ENCODE measurements at regions of chr2 and their contacts with region 1.

Region 1: DNA sequence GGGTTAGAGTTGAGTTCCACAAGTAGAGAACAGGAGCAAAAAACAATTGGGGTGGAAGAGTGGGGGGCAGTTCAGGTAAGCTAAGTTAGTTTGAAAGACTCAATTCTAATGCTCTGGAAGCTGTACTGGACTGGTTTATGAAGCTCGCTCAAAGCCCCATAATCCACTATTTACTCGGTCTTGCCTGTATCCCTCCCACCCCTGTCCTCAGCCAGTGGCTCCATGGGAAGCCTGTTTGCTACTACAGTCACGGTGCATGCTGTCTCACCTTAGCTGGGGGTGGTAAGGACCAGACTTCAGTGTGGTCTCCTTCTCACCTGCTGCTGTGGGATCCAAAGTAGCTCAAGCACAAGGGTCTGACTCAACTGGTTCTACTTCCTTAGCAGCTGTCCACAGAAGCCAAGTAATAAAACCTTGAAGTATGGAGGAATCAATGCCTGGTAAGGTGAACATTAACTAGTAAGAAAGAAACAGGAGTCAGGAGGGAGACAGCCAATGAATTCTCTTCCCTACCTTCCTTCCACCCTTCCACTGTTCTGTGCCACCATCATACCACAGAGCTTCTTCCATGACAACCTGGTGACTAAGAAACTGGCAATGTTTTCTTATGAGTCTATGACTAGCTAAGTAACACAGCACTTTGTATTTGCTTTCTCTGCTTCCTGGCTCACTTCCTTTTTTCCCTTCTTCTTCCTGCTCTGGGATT is 230.8 kb downstream of the SRBD1 start:
- DNase-seq: peak; percentile 98
- ATAC-seq: peak; percentile 98
- H3K4me3 ChIP-seq: no peak overlapping the region
- H3K27ac ChIP-seq: peak overlapping the region; percentile 98
- H3K4me1 ChIP-seq: peaks cover 40% of the 10 kb centered on the region
- H3K27me3 ChIP-seq: no peaks in the 10 kb centered on the region
- CTCF ChIP-seq: no peak

Region 2: DNA sequence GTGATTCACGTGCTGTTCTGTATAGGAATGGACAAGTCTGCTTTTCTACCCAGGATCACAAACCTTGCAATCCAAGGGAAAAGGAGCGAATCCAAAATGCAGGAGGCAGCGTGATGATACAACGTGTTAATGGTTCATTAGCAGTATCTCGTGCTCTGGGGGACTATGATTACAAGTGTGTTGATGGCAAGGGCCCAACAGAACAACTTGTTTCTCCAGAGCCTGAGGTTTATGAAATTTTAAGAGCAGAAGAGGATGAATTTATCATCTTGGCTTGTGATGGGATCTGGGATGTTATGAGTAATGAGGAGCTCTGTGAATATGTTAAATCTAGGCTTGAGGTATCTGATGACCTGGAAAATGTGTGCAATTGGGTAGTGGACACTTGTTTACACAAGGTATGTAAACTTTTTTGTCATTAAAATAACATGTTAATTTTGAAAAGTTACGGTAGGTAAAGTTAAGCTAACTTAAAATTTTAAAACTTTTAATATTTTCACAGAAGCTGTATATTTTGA is 1178.6 kb before region 1 on chr2:
- CTCF ChIA-PET with region 1: no interaction called
- POLR2A ChIA-PET with region 1: no interaction called
- intact Hi-C with region 1: no loop called
- DNase-seq: no peak
- ATAC-seq: no peak
- H3K4me3 ChIP-seq: no peak overlapping the region
- H3K27ac ChIP-seq: no peak overlapping the region
- H3K4me1 ChIP-seq: no peaks in the 10 kb centered on the region
- H3K27me3 ChIP-seq: no peaks in the 10 kb centered on the region
- CTCF ChIP-seq: no peak

Region 3: DNA sequence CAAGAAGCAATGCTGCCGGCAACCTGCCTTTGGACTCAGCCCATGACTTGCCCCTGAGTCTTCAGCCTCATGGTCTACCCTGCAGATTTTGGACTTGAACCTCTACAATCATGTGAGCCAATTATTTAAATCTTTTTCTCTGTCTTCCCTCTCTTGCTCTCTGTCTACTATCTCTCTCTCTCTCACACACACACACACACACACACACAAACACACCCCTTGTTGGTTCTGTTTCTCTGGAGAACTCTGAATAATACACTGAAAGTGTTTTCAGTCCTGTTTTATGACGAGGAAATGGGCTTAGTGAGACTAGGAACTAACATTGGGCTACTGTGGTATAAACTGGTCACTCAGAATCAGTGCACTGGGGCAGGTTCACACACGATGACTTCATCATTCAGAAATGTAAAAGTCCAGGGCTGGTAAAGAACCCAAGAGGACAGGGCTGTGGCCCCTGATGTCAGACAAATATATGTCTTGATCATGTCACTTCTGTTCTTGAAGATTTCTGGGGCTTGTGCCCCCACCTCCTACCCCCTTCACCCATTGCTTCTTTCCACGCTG is 105.0 kb before region 1 on chr2:
- CTCF ChIA-PET with region 1: no interaction called
- POLR2A ChIA-PET with region 1: no interaction called
- intact Hi-C with region 1: loop called (anchors 2 kb)
- DNase-seq: peak; percentile 94
- ATAC-seq: peak; percentile 57
- H3K4me3 ChIP-seq: no peak overlapping the region
- H3K27ac ChIP-seq: peak overlapping the region; percentile 93
- H3K4me1 ChIP-seq: peaks cover 80% of the 10 kb centered on the region
- H3K27me3 ChIP-seq: no peaks in the 10 kb centered on the region
- CTCF ChIP-seq: no peak

Region 4: DNA sequence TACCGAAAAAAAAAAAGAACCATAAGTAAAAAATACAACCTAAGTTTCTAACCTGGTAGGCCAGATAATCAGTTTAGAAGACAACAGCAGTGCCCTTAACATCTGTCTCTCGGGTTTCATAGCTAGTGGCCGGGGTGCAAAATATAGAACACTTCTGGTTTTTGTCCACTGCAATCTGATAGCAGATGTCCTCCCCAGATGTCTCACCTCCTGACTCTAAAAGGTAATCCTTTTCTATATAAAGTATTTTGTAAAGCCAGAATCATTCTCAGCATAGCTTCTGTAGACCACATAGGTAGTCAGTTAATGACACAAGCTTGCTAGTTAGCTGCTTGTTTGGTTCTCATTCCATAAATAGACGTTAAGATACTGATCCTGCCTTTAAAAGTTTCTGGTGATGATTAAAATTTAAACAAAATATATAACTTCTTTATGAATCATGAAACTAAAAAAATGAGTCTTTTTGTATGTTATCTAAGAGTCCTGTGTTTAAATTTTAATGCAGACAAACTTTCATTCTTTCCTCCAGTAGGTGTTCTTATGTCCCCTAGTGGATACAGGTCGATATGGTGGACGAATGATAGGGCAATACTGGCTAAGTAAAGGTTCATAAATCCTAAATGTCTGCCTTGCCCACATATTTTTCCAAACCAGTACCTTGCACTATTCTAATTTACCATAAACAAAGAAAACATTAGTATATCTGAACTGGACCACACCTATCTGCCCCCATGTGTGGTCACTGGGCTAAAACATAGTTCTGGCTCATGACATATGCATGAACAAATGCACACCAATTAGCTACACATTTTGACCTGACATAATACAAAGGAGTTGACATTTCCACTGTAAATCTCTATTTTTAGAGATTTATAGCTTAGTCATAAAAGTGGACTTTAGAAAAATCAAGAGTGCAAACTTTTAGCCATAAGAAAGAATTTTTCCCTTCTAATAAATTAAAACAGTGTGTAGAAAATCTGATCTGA is 59.8 kb after region 1 on chr2:
- CTCF ChIA-PET with region 1: no interaction called
- POLR2A ChIA-PET with region 1: no interaction called
- intact Hi-C with region 1: loop called (anchors 2 kb)
- DNase-seq: peak; percentile 59
- ATAC-seq: peak; percentile 76
- H3K4me3 ChIP-seq: no peak overlapping the region
- H3K27ac ChIP-seq: peak overlapping the region; percentile 71
- H3K4me1 ChIP-seq: peaks cover 21% of the 10 kb centered on the region
- H3K27me3 ChIP-seq: no peaks in the 10 kb centered on the region
- CTCF ChIP-seq: peak; percentile 80

Region 5: GRCh38 chr2:45483997-45484396 is 103.7 kb after region 1 on chr2:
- CTCF ChIA-PET with region 1: no interaction called
- POLR2A ChIA-PET with region 1: no interaction called
- intact Hi-C with region 1: no loop called
- DNase-seq: peak; percentile 29
- ATAC-seq: no peak
- H3K4me3 ChIP-seq: no peak overlapping the region
- H3K27ac ChIP-seq: no peak overlapping the region
- H3K4me1 ChIP-seq: no peaks in the 10 kb centered on the region
- H3K27me3 ChIP-seq: no peaks in the 10 kb centered on the region
- CTCF ChIP-seq: peak; percentile 56

Measured in PC-3 (cell line).